Activated naive CD4-positive, alpha-beta T cell treated with anti-CD3 and anti-CD28 coated beads for 36 hours (primary cell): ENCODE measurements at regions of chr14 and their contacts with region 1.

Region 1: GRCh38 chr14:95196290-95196689 is 39.0 kb upstream of the DICER1 start:
- DNase-seq: no peak
- H3K4me3 Mint-ChIP-seq: no peak overlapping the region
- H3K27ac Mint-ChIP-seq: no peak overlapping the region
- H3K4me1 Mint-ChIP-seq: no peaks in the 10 kb centered on the region
- H3K27me3 Mint-ChIP-seq: no peaks in the 10 kb centered on the region

Region 2: GRCh38 chr14:94769391-94770250 is 426.7 kb before region 1 on chr14 and contains the start of gene GSC:
- CTCF ChIA-PET with region 1: no interaction called
- intact Hi-C with region 1: loop called (anchors 10 kb)
- DNase-seq: peak; percentile 24
- H3K4me3 Mint-ChIP-seq: peak within 1 kb of the TSS; percentile 50
- H3K27ac Mint-ChIP-seq: no peak within 1 kb of the TSS
- H3K4me1 Mint-ChIP-seq: peaks cover 16% of the 10 kb centered on the region
- H3K27me3 Mint-ChIP-seq: peaks cover 79% of the 10 kb centered on the region
- total RNA-seq, gene GSC: not detected

Region 3: GRCh38 chr14:94888121-94888520 is 308.2 kb before region 1 on chr14:
- CTCF ChIA-PET with region 1: no interaction called
- intact Hi-C with region 1: no loop called
- DNase-seq: no peak
- H3K4me3 Mint-ChIP-seq: no peak overlapping the region
- H3K27ac Mint-ChIP-seq: no peak overlapping the region
- H3K4me1 Mint-ChIP-seq: no peaks in the 10 kb centered on the region
- H3K27me3 Mint-ChIP-seq: no peaks in the 10 kb centered on the region

Region 4: GRCh38 chr14:95273001-95273978 is 77.0 kb after region 1 on chr14:
- CTCF ChIA-PET with region 1: no interaction called
- intact Hi-C with region 1: no loop called
- DNase-seq: no peak
- H3K4me3 Mint-ChIP-seq: no peak overlapping the region
- H3K27ac Mint-ChIP-seq: no peak overlapping the region
- H3K4me1 Mint-ChIP-seq: peaks cover 2% of the 10 kb centered on the region
- H3K27me3 Mint-ChIP-seq: no peaks in the 10 kb centered on the region